Heart left ventricle (tissue), 16 donors: ENCODE measurements at regions of chr7 and their contacts with region 1.

Region 1: DNA sequence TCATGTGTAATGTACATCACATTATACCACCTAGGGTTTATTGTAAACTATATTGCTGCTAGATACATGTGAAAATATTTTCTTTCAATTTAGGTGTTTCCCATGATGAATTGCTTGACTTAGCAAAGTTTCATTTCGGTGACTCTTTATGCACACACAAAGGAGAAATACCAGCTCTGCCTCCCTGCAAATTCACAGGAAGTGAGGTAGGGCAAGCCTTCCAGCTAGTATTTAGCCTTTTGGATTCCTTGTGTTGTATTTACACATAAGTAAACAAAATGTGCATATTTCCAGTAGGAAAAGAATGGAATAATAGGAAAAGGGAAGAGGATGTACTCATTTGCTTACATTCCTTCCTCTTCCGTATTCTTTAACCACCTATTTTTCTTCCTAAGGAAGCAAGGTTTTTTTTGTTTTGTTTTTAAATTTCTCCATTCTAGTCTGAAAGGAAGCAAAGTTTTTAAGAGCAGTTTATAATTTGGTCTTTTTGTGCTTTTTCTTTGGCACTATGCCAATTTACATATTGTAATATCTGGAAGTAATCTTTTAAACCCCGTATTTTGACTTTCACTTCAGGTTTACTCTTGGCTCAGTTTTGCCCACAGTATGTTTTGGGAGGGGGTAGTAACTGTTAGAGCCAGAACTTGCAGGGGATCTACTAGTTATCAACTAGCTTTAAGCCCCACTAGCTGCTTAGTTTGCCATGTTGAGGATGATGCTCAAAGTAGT is 10.4 kb downstream of the PMPCB start:
- DNase-seq: no peak
- ATAC-seq: no peak
- H3K4me3 ChIP-seq: no peak overlapping the region
- H3K27ac ChIP-seq: no peak overlapping the region
- H3K4me1 ChIP-seq: peaks cover 0 to 7% (median 0%) of the 10 kb centered on the region in 12 donors
- H3K27me3 ChIP-seq: no peaks in the 10 kb centered on the region
- CTCF ChIP-seq: no peak
- POLR2A ChIP-seq: no peak

Region 2: DNA sequence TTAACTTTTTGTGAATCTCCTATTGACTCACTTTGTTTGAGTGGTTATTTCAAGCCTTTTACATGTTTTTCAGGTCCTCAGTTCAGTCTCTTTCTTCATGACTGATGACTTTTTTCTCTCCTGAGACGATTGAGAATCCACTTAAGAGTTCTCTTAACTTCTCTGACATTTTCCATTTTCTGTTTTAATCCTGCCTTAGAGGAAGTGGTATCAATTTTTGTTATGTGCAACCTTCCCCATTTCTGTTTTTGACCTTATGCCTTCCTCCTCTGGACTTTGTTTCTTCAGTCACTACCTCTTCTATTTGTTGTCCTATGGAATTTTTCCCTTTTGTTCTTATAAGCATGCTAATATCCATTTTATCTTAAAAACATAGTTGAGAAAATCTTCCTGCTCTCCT is 42.1 kb after region 1 on chr7:
- intact Hi-C with region 1: loop called in 1 of 10 experiments (anchors 10 kb)
- DNase-seq: no peak
- ATAC-seq: no peak
- H3K4me3 ChIP-seq: peak overlapping the region in 3 of 12 donors; percentile 65 to 80 (median 75)
- H3K27ac ChIP-seq: peak overlapping the region in 1 of 12 donors; percentile 59
- H3K4me1 ChIP-seq: peaks cover 9 to 53% (median 44%) of the 10 kb centered on the region in 12 donors
- H3K27me3 ChIP-seq: no peaks in the 10 kb centered on the region
- CTCF ChIP-seq: no peak
- POLR2A ChIP-seq: no peak

Region 3: DNA sequence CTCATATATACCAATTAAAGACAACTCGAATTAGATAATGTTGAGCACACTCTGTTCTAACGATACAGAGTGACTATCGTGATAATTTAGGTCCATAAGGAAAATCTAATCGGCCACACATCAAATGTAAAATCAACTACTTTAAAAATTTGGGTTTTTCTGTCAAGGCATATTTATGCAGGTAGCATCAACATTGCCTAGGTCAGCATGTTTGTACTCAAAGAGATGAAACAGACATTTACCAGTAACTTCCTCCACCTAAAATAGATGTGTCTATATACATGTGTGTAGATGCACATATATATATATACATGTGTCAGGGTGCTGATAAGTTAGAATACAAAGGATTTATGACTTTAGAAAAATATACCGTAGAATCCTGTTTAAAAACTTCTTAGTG is 61.8 kb after region 1 on chr7:
- intact Hi-C with region 1: loop called in 2 of 10 experiments (anchors 5 to 10 kb)
- DNase-seq: no peak
- ATAC-seq: no peak
- H3K4me3 ChIP-seq: no peak overlapping the region
- H3K27ac ChIP-seq: no peak overlapping the region
- H3K4me1 ChIP-seq: no peaks in the 10 kb centered on the region
- H3K27me3 ChIP-seq: no peaks in the 10 kb centered on the region
- CTCF ChIP-seq: no peak
- POLR2A ChIP-seq: no peak

Region 4: DNA sequence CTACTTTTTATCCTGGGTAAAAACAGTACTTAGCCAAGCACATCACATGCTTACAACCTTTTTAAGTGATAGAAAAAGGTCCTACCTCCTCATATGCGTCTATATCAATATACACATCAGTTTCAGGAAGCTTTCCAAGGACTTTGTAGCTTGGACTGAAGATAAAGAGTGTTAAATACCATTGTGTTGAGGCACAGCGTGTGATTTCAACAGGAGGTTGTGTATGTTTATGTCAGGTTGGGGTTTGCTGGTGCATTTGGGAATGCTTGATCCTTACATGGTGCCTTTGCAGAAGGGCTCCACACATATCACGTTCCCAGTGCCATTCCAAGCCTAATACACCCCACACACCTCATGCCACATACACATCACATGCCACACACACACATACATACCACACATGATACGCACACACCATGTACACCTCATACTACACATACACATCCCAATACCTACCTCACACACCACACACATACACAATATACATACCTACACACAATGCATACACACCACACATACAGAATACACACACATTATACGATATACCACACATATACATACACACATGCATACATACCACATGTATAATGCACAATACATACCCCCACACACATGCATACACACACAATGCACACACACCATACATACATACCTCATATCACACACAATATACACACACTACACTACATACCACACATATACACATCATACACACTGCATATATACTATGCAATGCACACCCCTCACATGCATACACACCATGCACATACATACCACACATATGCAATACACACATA is 72.9 kb after region 1 on chr7:
- intact Hi-C with region 1: no loop called
- DNase-seq: no peak
- ATAC-seq: peak in 1 of 4 donors; percentile 29
- H3K4me3 ChIP-seq: no peak overlapping the region
- H3K27ac ChIP-seq: no peak overlapping the region
- H3K4me1 ChIP-seq: no peaks in the 10 kb centered on the region
- H3K27me3 ChIP-seq: peaks cover 0 to 15% (median 0%) of the 10 kb centered on the region in 9 donors
- CTCF ChIP-seq: no peak
- POLR2A ChIP-seq: no peak